Activated CD4-positive, alpha-beta T cell treated with anti-CD3 and anti-CD28 coated beads, Interleukin-2, amount 10 ng/mL, durations not matched to agents 24 days and 14 days (primary cell): ENCODE measurements at regions of chr16 and their contacts with region 1.

Region 1: GRCh38 chr16:78770353-78771091 is 671.1 kb downstream of the WWOX start:
- DNase-seq: peak; percentile 93
- H3K4me3 Mint-ChIP-seq: no peak overlapping the region
- H3K27ac Mint-ChIP-seq: peak overlapping the region; percentile 67
- H3K4me1 Mint-ChIP-seq: peaks cover 28% of the 10 kb centered on the region
- H3K27me3 Mint-ChIP-seq: no peaks in the 10 kb centered on the region

Region 2: GRCh38 chr16:78729687-78730086 is 40.8 kb before region 1 on chr16:
- intact Hi-C with region 1: no loop called
- DNase-seq: no peak
- H3K4me3 Mint-ChIP-seq: no peak overlapping the region
- H3K27ac Mint-ChIP-seq: no peak overlapping the region
- H3K4me1 Mint-ChIP-seq: no peaks in the 10 kb centered on the region
- H3K27me3 Mint-ChIP-seq: peaks cover 5% of the 10 kb centered on the region

Region 3: GRCh38 chr16:78742501-78743283 is 27.8 kb before region 1 on chr16:
- intact Hi-C with region 1: loop called (anchors 1 kb)
- DNase-seq: peak; percentile 91
- H3K4me3 Mint-ChIP-seq: peak overlapping the region; percentile 66
- H3K27ac Mint-ChIP-seq: peak overlapping the region; percentile 87
- H3K4me1 Mint-ChIP-seq: peaks cover 18% of the 10 kb centered on the region
- H3K27me3 Mint-ChIP-seq: no peaks in the 10 kb centered on the region

Region 4: GRCh38 chr16:78816499-78817195 is 46.1 kb after region 1 on chr16:
- intact Hi-C with region 1: no loop called
- DNase-seq: no peak
- H3K4me3 Mint-ChIP-seq: no peak overlapping the region
- H3K27ac Mint-ChIP-seq: no peak overlapping the region
- H3K4me1 Mint-ChIP-seq: no peaks in the 10 kb centered on the region
- H3K27me3 Mint-ChIP-seq: no peaks in the 10 kb centered on the region

Region 5: GRCh38 chr16:79012731-79013434 is 242.4 kb after region 1 on chr16:
- intact Hi-C with region 1: no loop called
- DNase-seq: no peak
- H3K4me3 Mint-ChIP-seq: no peak overlapping the region
- H3K27ac Mint-ChIP-seq: no peak overlapping the region
- H3K4me1 Mint-ChIP-seq: peaks cover 6% of the 10 kb centered on the region
- H3K27me3 Mint-ChIP-seq: no peaks in the 10 kb centered on the region

Region 6: DNA sequence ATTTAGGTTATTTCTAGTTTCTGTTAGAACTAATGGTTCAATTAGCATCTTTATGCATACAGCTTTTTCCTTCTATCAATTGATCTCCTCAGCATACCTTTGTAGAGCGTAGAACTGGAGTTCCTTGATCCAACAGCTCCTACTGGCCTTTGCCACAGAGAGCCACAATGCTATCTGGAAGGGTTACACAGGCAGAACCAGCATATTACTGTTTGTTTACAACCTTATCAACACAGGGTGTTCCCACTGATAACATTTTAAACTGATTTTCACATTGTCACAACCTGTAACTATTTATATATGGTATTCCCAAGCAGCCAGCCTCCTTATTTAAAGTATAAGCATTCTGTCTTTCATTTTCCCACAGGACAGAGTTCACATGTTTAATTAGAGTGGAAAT is 447.8 kb after region 1 on chr16:
- intact Hi-C with region 1: no loop called
- DNase-seq: no peak
- H3K4me3 Mint-ChIP-seq: no peak overlapping the region
- H3K27ac Mint-ChIP-seq: peak overlapping the region; percentile 31
- H3K4me1 Mint-ChIP-seq: peaks cover 21% of the 10 kb centered on the region
- H3K27me3 Mint-ChIP-seq: peaks cover 9% of the 10 kb centered on the region

Region 7: DNA sequence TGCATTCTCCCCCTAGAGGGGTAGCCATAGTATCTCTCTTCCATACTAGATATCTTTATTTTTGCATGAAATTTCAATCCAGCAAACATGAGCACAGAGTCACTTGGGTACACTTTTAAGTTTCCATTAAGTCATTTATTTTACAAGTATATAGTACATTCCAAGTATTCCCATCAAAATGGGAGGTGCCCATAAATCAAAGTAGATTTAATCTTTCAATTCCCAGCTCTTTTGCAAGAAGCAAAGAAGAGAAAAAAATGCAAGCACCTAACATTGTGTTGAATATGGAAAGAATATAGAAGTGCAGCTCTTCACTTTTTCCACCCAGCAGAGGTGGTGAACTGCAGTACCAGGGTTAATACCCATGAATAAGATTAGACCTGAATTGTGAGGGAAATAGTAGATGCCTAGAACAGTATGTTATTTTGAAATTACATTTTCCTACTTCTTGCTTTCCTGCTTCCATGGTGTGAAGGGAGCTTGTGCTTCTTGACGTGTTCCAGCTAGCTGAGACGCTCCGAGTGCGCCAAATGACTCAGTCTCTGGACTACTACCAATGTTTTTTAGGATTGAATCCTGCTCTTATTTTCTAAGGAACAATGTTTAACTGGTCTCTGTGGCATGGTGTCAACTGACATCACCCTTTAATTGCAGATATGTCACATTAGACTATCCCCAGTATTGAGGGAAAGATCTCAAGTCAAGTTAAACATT is 981.1 kb after region 1 on chr16:
- intact Hi-C with region 1: loop called (anchors 10 kb)
- DNase-seq: no peak
- H3K4me3 Mint-ChIP-seq: no peak overlapping the region
- H3K27ac Mint-ChIP-seq: no peak overlapping the region
- H3K4me1 Mint-ChIP-seq: peaks cover 30% of the 10 kb centered on the region
- H3K27me3 Mint-ChIP-seq: peaks cover 19% of the 10 kb centered on the region